H1 (cell line): ENCODE measurements at regions of chr17 and their contacts with region 1.

Region 1: GRCh38 chr17:57662644-57663308 is 82.3 kb downstream of the CCDC182 start:
- DNase-seq: peak; percentile 82 to 97
- H3K4me3 ChIP-seq: peak overlapping the region; percentile 27 to 57 (median 44); a peak in 6 of 8 replicates
- H3K27ac ChIP-seq: no peak overlapping the region
- H3K4me1 ChIP-seq: peaks cover 14 to 24% (median 22%) of the 10 kb centered on the region in 4 experiments
- H3K27me3 ChIP-seq: no peaks in the 10 kb centered on the region
- CTCF ChIP-seq: no peak
- EP300 ChIP-seq: no peak
- POLR2A ChIP-seq: no peak
- RAD21 ChIP-seq: no peak

Region 2: DNA sequence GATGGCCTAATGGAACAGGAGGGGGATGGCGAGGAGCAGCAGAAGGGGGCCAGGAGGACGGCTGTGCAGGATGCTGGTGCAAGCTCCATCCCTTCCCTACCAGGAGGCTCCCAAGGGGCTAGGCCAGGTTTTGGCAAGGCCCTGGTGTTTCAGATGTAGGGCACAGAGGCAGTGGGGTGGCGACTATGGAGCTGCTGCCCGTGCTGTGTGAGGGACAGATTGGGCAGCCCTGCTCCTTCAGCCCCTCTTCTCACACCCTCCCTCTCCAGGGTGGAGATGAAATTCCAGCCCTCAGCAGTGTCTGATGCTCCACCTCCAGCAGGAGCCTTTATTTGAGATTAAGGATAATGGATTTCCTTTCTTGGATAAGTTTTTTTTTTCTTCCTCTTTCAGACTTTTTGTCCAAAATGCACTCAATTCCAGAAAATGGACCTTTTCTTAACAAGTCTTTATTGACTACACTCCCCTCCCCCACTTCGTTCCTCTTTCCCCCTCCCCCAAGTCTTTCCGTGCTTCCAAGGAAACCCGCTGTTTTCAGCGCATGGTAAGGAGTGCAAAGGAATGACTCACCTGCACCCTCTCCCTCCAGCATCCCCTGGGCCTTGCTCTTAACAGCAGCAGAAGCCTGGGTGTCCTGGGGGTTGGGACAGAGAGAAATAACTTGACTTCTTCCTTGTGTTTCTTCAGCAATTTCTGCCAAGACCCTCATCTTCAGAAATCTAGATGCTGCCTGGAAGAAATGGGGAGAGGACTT is 12.9 kb before region 1 on chr17:
- CTCF ChIA-PET with region 1: interaction called, 8 read pairs
- POLR2A ChIA-PET with region 1: interaction called, 18 read pairs
- DNase-seq: peak in 1 of 2 experiments; percentile 55
- H3K4me3 ChIP-seq: peak overlapping the region in 2 of 4 experiments; percentile 26 to 41; a peak in 1 of 8 replicates
- H3K27ac ChIP-seq: peak overlapping the region; percentile 17; the same call in 1 of the 2 replicates
- H3K4me1 ChIP-seq: peaks cover 10 to 23% (median 20%) of the 10 kb centered on the region in 4 experiments
- H3K27me3 ChIP-seq: no peaks in the 10 kb centered on the region
- CTCF ChIP-seq: no peak
- EP300 ChIP-seq: 0 out of 3 replicates have a peak, but pooled peaks of 1 of the 2 experiments have one; percentile 40
- POLR2A ChIP-seq: no peak
- RAD21 ChIP-seq: no peak

Region 3: DNA sequence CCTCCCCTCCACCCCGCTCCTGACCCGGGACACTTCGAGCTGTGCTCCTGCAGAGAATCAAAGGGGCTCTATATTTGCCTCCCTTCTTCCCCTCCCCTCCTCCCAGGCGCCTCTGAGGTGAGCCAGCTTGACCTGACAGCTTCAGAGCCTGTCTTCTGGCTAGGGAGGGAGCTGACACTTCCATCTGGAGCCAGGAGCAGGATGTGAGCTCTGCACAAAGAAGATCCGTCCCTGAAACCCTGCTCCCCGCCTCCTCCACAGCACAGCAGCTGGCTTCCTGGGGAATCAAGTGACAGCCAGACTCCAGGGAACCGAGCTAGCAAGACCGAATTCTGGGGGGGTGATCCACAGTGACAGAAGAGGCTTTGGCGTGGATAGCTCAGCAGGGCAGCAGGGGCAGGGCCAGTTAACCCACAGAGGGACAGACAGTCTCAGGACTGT is 45.1 kb after region 1 on chr17:
- CTCF ChIA-PET with region 1: no interaction called
- POLR2A ChIA-PET with region 1: no interaction called
- DNase-seq: peak in 1 of 2 experiments; percentile 60
- H3K4me3 ChIP-seq: peak overlapping the region in 2 of 4 experiments; percentile 9 to 36; a peak in 2 of 8 replicates
- H3K27ac ChIP-seq: no peak overlapping the region
- H3K4me1 ChIP-seq: peaks cover 0 to 11% (median 6%) of the 10 kb centered on the region in 4 experiments; a peak in 6 of 7 replicates
- H3K27me3 ChIP-seq: no peaks in the 10 kb centered on the region; a peak in 2 of 7 replicates
- CTCF ChIP-seq: peak in 1 of 3 experiments; percentile 7; a peak in 1 of 4 replicates
- EP300 ChIP-seq: no peak
- POLR2A ChIP-seq: no peak
- RAD21 ChIP-seq: no peak